Left cardiac atrium (tissue), 4 donors: ENCODE measurements at regions of chr22 and their contacts with region 1.

Region 1: DNA sequence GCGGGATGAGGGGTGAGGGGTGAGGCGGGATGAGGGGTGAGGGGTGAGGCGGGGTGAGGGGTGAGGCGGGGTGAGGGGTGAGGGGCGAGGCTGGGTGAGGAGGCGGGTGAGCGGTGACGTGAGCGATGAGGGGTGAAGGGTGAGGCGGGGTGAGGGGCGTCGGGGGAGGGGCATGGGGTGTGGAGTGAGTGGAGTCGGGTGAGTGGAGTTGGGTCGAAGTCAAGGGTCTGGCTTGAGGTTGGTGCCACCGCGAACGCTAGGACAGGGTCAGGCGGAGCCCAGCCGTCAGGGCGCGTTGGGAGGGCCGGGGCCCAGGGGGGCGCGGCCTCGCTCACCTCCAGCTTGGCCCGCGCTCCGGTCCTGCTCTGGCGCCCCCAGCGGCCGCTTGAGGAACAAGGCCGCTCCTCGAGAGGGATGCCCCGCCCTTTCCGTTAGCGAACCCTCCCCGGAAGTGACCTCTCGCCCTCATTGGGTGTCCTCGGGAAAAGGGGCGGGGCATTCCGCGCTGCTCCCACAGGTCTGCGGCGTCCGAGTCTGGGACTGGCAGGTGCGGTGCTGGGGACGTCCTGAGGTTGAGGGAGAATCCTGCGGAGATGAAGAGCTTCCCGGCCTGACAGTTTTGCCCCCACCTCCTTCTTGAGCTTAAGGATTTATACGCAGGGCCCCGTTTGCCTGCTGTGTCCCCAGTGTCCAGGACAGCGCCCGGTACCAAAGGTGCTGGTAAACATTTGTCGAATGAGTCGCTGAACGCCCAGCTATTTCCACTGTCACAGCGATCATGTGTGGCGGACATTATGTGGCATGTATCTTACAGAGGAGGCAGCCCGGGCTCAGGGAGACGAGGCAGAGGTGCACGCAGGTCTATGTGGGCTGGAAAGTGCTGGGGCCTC is at the start of gene SYCE3:
- DNase-seq: peak; percentile 98
- ATAC-seq: peak; percentile 96 to 97
- total RNA-seq, gene SYCE3: not detected

Region 2: GRCh38 chr22:50260801-50261614 is 301.8 kb before region 1 on chr22:
- intact Hi-C with region 1: no loop called
- DNase-seq: peak; percentile 67
- ATAC-seq: peak; percentile 13 to 25

Region 3: GRCh38 chr22:50525390-50526068 is 37.2 kb before region 1 on chr22 and contains the start of gene SCO2:
- intact Hi-C with region 1: loop called in 1 of 2 experiments (anchors 2 kb)
- DNase-seq: peak; percentile 97
- ATAC-seq: peak; percentile 58 to 77
- total RNA-seq, gene SCO2: 1.3 TPM in 1 of 2 donors, not detected in the other